GM10248 (cell line): ENCODE measurements at regions of chr4 and their contacts with region 1.

Region 1: DNA sequence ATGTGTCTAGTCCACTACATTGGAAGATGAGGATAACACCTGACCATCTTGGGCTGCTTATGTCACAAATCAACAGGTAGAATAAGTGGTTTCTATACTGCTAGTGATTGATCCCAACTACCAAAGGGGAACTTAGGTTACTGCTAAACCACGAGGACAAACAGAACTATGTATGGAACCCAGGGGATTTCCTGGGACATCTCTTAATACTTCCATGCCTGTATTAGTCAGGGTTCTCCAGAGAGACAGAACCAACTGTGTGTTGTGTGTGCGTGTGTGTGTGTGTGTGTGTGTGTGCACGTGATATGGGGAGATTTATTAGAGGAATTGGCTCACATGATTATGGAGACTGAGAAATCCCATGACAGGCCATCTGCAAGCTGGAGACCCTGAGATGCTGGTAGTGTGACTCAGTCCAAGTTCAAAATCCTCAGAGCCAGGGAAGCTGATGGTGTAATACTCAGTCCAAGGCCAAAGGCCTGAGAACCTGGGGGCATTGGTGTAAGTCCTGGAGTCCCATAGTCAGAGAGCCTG is 16.2 kb upstream of the AFF1 start:
- DNase-seq: no peak
- CTCF ChIP-seq: no peak

Region 2: GRCh38 chr4:86908251-86908657 is 10.4 kb before region 1 on chr4:
- CTCF ChIA-PET with region 1: interaction called, 54 read pairs
- POLR2A ChIA-PET with region 1: no interaction called
- DNase-seq: no peak
- CTCF ChIP-seq: no peak

Region 3: GRCh38 chr4:86961605-86962295 is 43.1 kb after region 1 on chr4:
- CTCF ChIA-PET with region 1: interaction called, 19 read pairs
- POLR2A ChIA-PET with region 1: no interaction called
- DNase-seq: peak; percentile 66
- CTCF ChIP-seq: no peak

Region 4: DNA sequence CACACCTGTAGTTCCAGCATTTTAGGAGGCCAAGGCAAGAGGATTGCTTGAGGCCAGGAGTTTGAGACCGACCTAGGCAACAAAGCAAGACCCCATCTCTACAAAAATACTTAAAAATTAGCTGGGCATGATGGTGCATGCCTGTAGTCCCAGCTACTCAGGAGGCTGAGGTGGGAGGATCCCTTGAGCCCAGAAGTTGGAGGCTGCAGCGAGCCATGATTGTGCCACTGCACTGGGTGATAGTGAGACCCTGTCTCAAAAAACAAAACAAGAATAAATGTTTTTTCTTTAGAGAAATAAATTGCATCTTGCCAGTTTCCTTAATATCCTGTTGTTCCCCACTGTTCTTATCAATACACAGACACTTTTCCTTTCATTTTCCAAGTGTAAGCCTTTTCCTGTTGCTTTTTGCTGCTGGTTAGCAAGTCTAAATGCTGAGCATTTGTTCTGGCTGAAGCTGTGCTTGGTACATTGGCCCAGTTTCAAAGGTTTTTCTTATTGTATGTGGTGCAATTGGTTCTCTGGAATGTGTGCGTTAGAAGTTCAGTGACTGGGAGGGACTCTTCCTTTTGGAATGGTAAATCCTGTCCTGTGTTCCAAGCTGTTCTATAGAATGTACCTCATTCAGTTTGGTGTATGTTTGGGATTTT is 114.4 kb after region 1 on chr4:
- CTCF ChIA-PET with region 1: interaction called, 11 read pairs
- POLR2A ChIA-PET with region 1: no interaction called
- DNase-seq: no peak
- CTCF ChIP-seq: no peak

Region 5: DNA sequence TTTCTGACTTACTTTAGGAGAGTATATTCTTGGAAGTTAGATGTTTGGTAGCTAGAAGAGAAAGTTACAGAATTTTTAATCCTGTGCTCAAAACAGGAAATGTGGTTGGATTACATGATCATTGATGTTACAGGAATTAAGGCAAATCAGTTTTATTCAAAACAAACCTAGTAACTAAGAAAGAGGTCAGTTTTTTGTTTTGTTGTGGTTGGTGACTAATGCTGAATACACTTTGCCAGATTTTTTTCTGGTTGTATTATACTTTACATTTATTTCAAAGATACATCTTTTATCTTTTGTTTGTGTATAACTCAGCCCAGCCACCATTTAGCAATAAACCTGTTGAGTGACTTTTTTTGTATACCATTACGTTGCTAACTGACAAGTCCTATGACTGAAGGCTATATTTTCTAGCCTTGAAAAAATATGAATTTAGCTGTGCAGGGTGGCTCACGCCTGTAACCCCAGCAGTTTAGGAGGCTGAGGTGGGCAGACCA is 185.1 kb after region 1 on chr4:
- CTCF ChIA-PET with region 1: interaction called, 31 read pairs
- POLR2A ChIA-PET with region 1: no interaction called
- DNase-seq: no peak
- CTCF ChIP-seq: no peak

Region 6: GRCh38 chr4:87150498-87151261 is 232.1 kb after region 1 on chr4:
- CTCF ChIA-PET with region 1: interaction called, 11 read pairs
- POLR2A ChIA-PET with region 1: no interaction called
- DNase-seq: peak; percentile 45
- CTCF ChIP-seq: peak; percentile 84